ENCODE measurements at regions of chr20 and their contacts with region 1.

Region 1: DNA sequence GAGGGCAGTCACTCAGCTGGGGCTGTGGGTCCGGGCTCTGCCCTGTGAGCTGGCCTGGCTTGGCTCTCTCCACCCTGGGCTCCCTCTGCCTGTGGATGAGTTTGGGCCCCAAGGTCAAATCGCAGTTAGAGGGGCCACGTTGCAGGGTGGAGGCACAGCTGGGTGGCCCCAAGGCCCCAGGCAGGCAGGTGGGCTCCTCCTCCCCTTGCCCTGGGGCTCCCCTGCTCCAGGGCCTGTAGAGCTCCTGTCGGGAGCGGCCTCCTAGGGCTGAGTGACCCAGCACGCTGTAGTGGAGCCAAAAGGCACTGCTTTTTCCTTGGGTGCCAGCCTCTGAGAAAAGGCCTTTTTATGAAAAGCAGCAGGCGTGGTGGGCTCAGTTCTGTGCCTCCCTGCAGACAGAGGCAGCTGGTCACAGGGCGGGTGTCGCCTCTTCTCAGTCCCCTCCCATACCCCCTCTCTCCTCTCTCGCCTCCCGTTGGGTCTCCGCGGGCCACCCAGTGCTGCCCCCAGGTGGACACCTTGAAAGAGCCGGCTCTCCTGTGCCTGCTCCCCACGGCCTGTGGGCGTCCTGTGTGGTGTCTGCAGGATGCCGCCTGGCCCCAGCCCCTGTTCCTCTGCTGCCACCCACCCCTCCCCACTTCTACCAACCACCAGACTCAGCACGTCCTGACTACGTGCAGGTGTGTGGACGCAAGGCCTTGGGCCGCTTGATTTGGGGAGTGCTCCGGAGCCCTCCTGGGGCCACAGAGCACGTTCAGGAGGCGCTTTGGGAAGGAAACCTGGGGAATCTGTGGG is 13.2 kb downstream of the SS18L1 start:
- DNase-seq: peak in 1 of 2 experiments; percentile 89
- H3K4me3 ChIP-seq: no peak overlapping the region
- H3K27ac ChIP-seq: no peak overlapping the region; the same call in 1 of the 2 replicates
- H3K4me1 ChIP-seq: peaks cover 0 to 16% (median 8%) of the 10 kb centered on the region in 4 experiments; a peak in 6 of 7 replicates
- H3K27me3 ChIP-seq: no peaks in the 10 kb centered on the region
- CTCF ChIP-seq: peak; percentile 80 to 82 (median 81)
- EP300 ChIP-seq: no peak
- POLR2A ChIP-seq: no peak
- RAD21 ChIP-seq: peak; percentile 32 to 57; a peak in 3 of 4 replicates

Region 2: GRCh38 chr20:62025832-62026563 is 130.8 kb before region 1 on chr20:
- CTCF ChIA-PET with region 1: no interaction called
- POLR2A ChIA-PET with region 1: no interaction called
- DNase-seq: no peak
- H3K4me3 ChIP-seq: no peak overlapping the region
- H3K27ac ChIP-seq: no peak overlapping the region
- H3K4me1 ChIP-seq: peaks cover 2 to 22% (median 12%) of the 10 kb centered on the region in 4 experiments
- H3K27me3 ChIP-seq: no peaks in the 10 kb centered on the region
- CTCF ChIP-seq: peak in 1 of 3 experiments; percentile 18; a peak in 1 of 4 replicates
- EP300 ChIP-seq: no peak
- POLR2A ChIP-seq: no peak
- RAD21 ChIP-seq: peak; percentile 24 to 34; a peak in 3 of 4 replicates

Region 3: DNA sequence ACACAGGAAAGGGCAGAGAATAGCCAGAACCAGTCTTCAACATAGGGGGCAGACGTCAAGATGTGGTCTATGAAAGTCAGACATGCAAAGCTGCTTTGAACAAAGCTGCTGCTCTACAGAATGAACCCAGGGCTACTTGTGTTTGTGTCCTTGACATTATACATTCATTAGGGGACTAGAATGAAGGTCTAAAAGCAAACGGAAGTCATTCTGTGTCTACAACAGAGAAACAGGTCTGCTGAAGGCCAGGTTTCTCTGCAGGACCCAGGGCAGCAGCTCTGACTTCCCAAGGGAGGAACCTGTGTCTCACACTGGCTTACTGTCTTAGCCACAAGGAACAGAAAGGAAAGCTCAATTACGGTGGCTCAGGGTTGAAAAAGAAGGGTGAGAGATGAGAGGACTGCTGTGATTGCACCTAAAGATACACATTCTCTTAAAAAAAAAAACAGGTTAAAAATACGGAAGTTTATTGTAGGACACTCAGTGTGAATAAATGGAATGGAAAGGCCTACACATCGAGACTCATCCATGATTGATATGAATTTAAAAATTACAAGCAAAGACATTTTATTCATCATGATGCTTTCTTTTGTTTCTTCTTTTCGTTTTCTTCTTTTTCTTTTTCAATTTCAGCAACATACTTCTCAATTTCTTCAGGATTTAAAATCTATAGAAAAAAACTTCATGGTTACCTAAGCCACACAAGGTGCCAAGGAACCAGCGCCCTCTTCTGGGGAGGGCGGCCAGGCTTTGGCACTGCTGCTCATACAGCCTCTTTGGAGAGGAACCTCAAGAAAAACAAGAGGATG is 20.3 kb before region 1 on chr20:
- CTCF ChIA-PET with region 1: interaction called, 13 read pairs
- POLR2A ChIA-PET with region 1: interaction called, 6 read pairs
- DNase-seq: no peak
- H3K4me3 ChIP-seq: no peak overlapping the region
- H3K27ac ChIP-seq: no peak overlapping the region
- H3K4me1 ChIP-seq: peaks cover 0 to 1% (median 0%) of the 10 kb centered on the region in 4 experiments; a peak in 2 of 7 replicates
- H3K27me3 ChIP-seq: no peaks in the 10 kb centered on the region
- CTCF ChIP-seq: peak; percentile 76 to 90 (median 79)
- EP300 ChIP-seq: no peak
- POLR2A ChIP-seq: peak in 1 of 2 experiments; percentile 47; a peak in 1 of 3 replicates
- RAD21 ChIP-seq: peak; percentile 68 to 74

Region 4: DNA sequence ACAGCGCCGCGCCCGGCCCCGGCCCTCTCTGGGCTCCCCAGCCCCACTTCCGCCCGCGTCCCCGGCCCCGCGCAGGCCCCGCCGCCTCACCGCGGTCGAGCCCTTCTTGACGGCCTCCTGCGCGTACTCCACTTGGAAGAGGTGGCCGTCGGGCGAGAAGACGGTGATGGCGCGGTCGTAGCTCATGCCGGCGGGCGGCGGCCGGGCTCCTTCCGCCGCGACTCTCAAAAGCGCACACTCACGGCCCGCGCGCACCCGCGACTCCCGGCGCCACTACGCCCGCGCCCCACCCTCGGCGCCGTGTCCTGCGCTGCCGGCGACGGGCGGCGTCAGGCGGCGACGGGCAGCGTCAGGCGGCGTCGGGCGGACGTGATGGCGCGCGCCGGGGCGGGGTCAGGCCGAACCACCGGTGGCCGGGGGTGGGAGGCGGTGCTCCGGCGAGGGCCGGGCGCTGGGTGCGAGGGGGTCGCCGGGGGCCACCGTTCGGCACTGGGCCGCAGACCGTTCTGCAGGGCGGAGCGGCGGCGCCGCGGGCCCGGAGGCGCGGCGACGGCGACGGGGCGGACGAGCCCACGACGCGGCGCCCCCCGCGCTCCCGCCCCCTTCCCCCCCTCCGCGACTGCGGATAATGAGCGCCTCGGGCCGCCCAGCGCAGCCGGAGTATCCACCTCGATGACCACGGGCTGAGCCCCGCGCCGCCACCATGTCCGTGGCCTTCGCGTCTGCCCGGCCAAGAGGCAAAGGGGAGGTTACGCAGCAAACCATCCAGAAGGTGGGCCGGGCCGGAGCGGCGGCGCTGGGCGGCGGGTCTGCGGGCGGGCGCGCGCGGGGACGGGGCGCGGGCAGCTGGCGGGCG is 13.4 kb before region 1 on chr20 and contains the starts of genes PSMA7 and SS18L1:
- CTCF ChIA-PET with region 1: interaction called, 9 read pairs
- POLR2A ChIA-PET with region 1: interaction called, 10 read pairs
- DNase-seq: peak in 1 of 2 experiments; percentile 87
- H3K4me3 ChIP-seq: peak within 1 kb of the TSS; percentile 63 to 81 (median 67)
- H3K27ac ChIP-seq: peak within 1 kb of the TSS; percentile 95; the same call in 1 of the 2 replicates
- H3K4me1 ChIP-seq: peaks cover 0 to 12% (median 4%) of the 10 kb centered on the region in 4 experiments; a peak in 6 of 7 replicates
- H3K27me3 ChIP-seq: no peaks in the 10 kb centered on the region
- CTCF ChIP-seq: no peak
- EP300 ChIP-seq: peak in 1 of 2 experiments; percentile 85; a peak in 1 of 3 replicates
- POLR2A ChIP-seq: peak in 1 of 2 experiments; percentile 70; a peak in 1 of 3 replicates
- RAD21 ChIP-seq: no peak
- total RNA-seq, gene PSMA7: 339 and 361 TPM in 2 replicates
- total RNA-seq, gene SS18L1: 22.4 and 28.4 TPM in 2 replicates

Region 5: GRCh38 chr20:62168061-62168460 is 11.3 kb after region 1 on chr20:
- CTCF ChIA-PET with region 1: interaction called, 16 read pairs
- POLR2A ChIA-PET with region 1: interaction called, 6 read pairs
- DNase-seq: no peak
- H3K4me3 ChIP-seq: no peak overlapping the region
- H3K27ac ChIP-seq: no peak overlapping the region
- H3K4me1 ChIP-seq: no peaks in the 10 kb centered on the region
- H3K27me3 ChIP-seq: no peaks in the 10 kb centered on the region
- CTCF ChIP-seq: no peak
- EP300 ChIP-seq: no peak
- POLR2A ChIP-seq: no peak
- RAD21 ChIP-seq: no peak

Region 6: DNA sequence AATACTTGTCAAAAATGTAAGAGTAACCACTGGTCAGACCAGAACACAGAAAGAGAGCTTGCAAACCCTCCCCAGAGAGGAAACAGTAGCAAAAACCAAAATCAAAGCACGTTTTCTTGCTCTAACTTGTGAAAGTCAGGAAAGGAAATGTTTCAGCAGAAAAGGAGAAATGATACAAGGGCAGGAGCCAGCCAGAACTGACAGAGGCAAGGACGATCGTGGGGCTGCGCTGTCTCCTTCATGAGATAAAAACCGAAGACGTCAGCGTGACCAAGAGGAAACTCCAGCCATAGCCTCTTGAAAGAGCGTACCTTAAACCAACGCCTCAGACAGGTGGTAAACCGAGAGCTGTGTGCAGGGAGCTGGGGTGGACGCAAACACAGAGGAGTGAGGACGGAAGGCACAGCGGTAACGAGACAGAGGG is 182.9 kb after region 1 on chr20:
- CTCF ChIA-PET with region 1: no interaction called
- POLR2A ChIA-PET with region 1: no interaction called
- DNase-seq: no peak
- H3K4me3 ChIP-seq: no peak overlapping the region
- H3K27ac ChIP-seq: no peak overlapping the region
- H3K4me1 ChIP-seq: no peaks in the 10 kb centered on the region
- H3K27me3 ChIP-seq: no peaks in the 10 kb centered on the region
- CTCF ChIP-seq: no peak
- EP300 ChIP-seq: no peak
- POLR2A ChIP-seq: no peak
- RAD21 ChIP-seq: no peak

Measured in H1 (cell line).